Breast epithelium (tissue), 4 donors: ENCODE measurements at regions of chr2 and their contacts with region 1.

Region 1: GRCh38 chr2:32118055-32118454 is 47.6 kb upstream of the SLC30A6 start:
- DNase-seq: no peak
- H3K4me3 ChIP-seq: no peak overlapping the region
- H3K27ac ChIP-seq: no peak overlapping the region
- H3K4me1 ChIP-seq: no peaks in the 10 kb centered on the region
- H3K27me3 ChIP-seq: no peaks in the 10 kb centered on the region
- CTCF ChIP-seq: no peak
- POLR2A ChIP-seq: no peak

Region 2: GRCh38 chr2:31568585-31569201 is 549.4 kb before region 1 on chr2:
- intact Hi-C with region 1: no loop called
- DNase-seq: no peak
- H3K4me3 ChIP-seq: no peak overlapping the region
- H3K27ac ChIP-seq: no peak overlapping the region
- H3K4me1 ChIP-seq: no peaks in the 10 kb centered on the region
- H3K27me3 ChIP-seq: no peaks in the 10 kb centered on the region
- CTCF ChIP-seq: no peak
- POLR2A ChIP-seq: no peak

Region 3: GRCh38 chr2:32067535-32067934 is 50.5 kb before region 1 on chr2:
- intact Hi-C with region 1: loop called (anchors 2 kb)
- DNase-seq: no peak
- H3K4me3 ChIP-seq: no peak overlapping the region
- H3K27ac ChIP-seq: no peak overlapping the region
- H3K4me1 ChIP-seq: no peaks in the 10 kb centered on the region
- H3K27me3 ChIP-seq: no peaks in the 10 kb centered on the region
- CTCF ChIP-seq: no peak
- POLR2A ChIP-seq: no peak

Region 4: DNA sequence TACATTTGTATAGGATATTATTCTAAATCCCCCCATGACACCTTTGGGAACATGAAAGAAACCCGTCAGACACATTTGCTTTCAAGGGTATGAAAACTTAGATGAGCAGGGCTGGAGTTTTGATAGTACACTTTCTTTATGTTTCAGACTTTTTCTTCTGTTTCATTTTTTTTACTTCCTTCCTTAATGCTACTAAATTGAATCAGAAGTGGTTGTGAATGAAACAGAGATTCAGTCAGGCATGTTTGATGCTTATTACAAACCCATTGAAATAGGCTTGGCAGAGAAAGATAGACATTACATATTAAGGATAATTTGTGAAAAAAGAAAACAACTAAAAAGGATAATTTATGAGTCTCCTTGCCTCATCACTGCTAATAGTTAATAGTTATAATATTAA is 74.4 kb after region 1 on chr2:
- intact Hi-C with region 1: no loop called
- DNase-seq: no peak
- H3K4me3 ChIP-seq: no peak overlapping the region
- H3K27ac ChIP-seq: no peak overlapping the region
- H3K4me1 ChIP-seq: no peaks in the 10 kb centered on the region
- H3K27me3 ChIP-seq: no peaks in the 10 kb centered on the region
- CTCF ChIP-seq: no peak
- POLR2A ChIP-seq: no peak

Region 5: DNA sequence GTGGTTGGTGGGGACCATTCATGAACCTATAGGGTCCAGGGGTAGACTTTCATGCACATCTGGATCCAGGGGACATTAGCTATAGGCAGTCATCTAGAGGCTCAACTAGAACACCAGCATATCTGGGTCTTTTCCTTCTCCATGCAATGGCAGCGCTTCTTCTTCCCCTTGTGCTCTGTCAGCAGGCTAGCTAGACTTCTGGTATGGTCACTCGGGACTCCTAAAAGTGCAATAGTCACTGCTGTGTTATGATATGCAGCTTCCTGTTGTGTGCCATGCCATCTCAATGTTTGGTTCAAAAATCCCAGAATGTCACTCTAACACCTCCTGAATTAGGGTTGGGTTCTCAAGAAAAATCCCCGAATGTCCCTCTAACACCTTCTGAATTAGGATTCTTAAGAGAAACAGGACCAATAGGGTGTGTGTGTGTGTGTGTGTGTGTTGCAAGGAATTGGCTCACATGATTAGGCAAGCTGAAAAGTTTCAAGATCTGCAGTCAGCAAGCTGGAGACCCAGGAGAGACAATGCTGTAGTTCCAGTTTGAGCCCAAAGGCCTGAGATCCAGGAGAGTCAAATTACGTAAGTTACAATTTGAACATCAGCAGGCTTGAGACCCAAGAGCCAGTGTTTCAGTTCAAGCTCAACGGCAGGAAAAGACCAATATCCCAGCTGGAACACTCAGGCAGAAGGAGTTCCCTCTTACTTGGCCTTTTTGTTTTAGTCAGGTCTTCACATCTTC is 731.6 kb after region 1 on chr2:
- intact Hi-C with region 1: no loop called
- DNase-seq: no peak
- H3K4me3 ChIP-seq: no peak overlapping the region
- H3K27ac ChIP-seq: no peak overlapping the region
- H3K4me1 ChIP-seq: no peaks in the 10 kb centered on the region
- H3K27me3 ChIP-seq: no peaks in the 10 kb centered on the region
- CTCF ChIP-seq: no peak
- POLR2A ChIP-seq: no peak